Posterior cingulate gyrus (tissue), 11 donors: ENCODE measurements at regions of chrX and their contacts with region 1.

Region 1: DNA sequence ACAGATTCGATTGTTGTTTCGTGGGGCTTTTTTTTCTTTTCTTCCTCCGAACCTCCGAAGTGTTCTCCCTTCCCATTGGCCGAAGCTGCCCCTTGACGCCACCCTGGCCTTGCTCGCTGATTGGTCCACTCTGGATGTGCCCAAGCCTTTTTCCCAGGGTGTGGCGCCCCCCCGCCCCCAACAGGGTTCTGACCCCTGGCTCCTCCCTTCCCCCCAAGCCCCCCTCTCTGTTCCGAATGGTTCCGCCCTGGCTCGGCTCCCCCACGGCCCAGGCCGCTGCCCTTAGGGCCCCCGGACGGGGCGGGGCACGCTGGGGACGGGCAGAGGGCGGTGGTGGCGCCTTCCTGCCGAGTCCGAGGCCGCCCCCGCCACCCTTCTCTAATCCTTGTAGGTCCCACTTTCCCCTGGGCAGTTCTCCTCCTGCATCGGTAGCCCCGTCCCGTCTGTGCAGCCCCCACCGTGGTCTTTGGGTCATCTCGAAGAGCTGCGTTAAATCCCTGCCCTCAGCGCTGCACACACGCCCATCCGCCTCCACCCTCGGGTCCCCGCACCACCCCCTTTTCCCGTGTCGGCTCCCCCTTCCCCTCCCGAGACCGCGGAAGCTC is 25.5 kb downstream of the UTP14A start:
- DNase-seq: peak; percentile 77 to 98 (median 88)

Region 2: GRCh38 chrX:129982274-129983251 is 51.0 kb after region 1 on chrX and contains the start of gene BCORL1:
- intact Hi-C with region 1: loop called (anchors 1 kb)
- DNase-seq: peak; percentile 82 to 98 (median 90)